Natural killer cell (primary cell): ENCODE measurements at regions of chr7 and their contacts with region 1.

Region 1: GRCh38 chr7:44847508-44847920 is 373 bp downstream of the H2AZ2 start:
- DNase-seq: peak; percentile 84 to 91
- ATAC-seq: peak; percentile 54 to 76 (median 62)
- H3K4me3 ChIP-seq: peak overlapping the region; percentile 83
- H3K4me3 Mint-ChIP-seq: peak overlapping the region; percentile 98
- H3K27ac ChIP-seq: peak overlapping the region; percentile 100
- H3K27ac Mint-ChIP-seq: peak overlapping the region; percentile 98 to 99
- H3K4me1 ChIP-seq: peaks cover 15% of the 10 kb centered on the region
- H3K4me1 Mint-ChIP-seq: peaks cover 28 to 38% of the 10 kb centered on the region in 2 donors
- H3K27me3 ChIP-seq: no peaks in the 10 kb centered on the region
- H3K27me3 Mint-ChIP-seq: no peaks in the 10 kb centered on the region
- CTCF ChIP-seq: peak; percentile 81

Region 2: GRCh38 chr7:44489955-44490350 is 357.6 kb before region 1 on chr7:
- intact Hi-C with region 1: loop called (anchors 5 kb)
- DNase-seq: peak in 1 of 2 donors; percentile 72
- ATAC-seq: peak; percentile 25 to 39 (median 25)
- H3K4me3 ChIP-seq: peak overlapping the region; percentile 51
- H3K4me3 Mint-ChIP-seq: peak overlapping the region; percentile 92
- H3K27ac ChIP-seq: peak overlapping the region; percentile 81
- H3K27ac Mint-ChIP-seq: peak overlapping the region; percentile 85 to 88
- H3K4me1 ChIP-seq: peaks cover 10% of the 10 kb centered on the region
- H3K4me1 Mint-ChIP-seq: peaks cover 40 to 44% of the 10 kb centered on the region in 2 donors
- H3K27me3 ChIP-seq: no peaks in the 10 kb centered on the region
- H3K27me3 Mint-ChIP-seq: peaks cover 6% of the 10 kb centered on the region in 2 donors
- CTCF ChIP-seq: no peak

Region 3: DNA sequence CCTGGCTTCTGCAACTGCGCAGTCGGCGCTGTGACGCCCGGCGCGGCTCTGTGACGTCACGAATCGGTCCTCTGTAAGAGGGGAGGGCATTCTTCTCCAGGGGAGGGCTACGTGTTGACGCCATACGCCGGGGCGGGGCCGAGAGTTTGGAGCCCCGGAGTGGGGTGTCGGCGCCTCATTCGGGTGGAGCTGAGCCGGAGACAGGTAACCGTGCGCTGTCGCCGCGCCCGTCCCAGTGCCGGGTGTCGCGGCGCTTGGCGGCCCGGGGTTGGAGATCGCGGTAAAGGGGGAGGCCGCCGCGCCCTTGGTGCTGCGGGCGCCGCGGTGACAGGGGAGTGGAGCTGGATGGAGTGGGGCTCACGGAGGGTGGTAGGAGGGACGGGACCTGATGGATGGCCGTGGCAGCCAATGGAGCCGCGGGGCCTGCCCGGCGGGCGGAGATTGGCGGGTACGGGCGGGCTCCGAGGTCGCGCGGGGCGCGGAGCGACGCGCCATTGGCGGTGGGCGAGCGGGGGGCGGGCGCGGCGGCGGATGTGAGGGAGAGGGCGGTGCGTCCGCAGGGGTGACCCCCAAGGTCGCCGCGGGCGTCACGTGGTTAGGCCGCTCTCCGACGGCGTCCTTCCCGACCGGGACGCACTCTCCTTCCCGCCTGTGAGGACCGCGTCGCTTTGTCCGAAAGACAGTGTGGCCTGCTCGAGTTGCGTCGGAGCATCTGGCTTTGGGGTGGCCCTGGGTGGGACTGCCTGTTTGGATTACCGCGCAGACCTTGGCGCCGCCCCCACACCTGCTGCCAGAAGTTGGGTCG is 240.9 kb before region 1 on chr7 and contains the start of gene OGDH:
- intact Hi-C with region 1: loop called (anchors 1 kb)
- DNase-seq: peak; percentile 99 to 100
- ATAC-seq: peak; percentile 90 to 98 (median 92)
- H3K4me3 ChIP-seq: peak within 1 kb of the TSS; percentile 86
- H3K4me3 Mint-ChIP-seq: peak within 1 kb of the TSS; percentile 99
- H3K27ac ChIP-seq: peak within 1 kb of the TSS; percentile 92
- H3K27ac Mint-ChIP-seq: peak within 1 kb of the TSS; percentile 99 to 100
- H3K4me1 ChIP-seq: peaks cover 28% of the 10 kb centered on the region
- H3K4me1 Mint-ChIP-seq: peaks cover 27 to 35% of the 10 kb centered on the region in 2 donors
- H3K27me3 ChIP-seq: no peaks in the 10 kb centered on the region
- H3K27me3 Mint-ChIP-seq: no peaks in the 10 kb centered on the region
- CTCF ChIP-seq: no peak
- total RNA-seq, gene OGDH: 69.2 to 86.7 (median 81.4) TPM

Region 4: GRCh38 chr7:44638611-44639557 is 208.6 kb before region 1 on chr7:
- intact Hi-C with region 1: loop called (anchors 2 kb)
- DNase-seq: peak; percentile 72 to 87
- ATAC-seq: peak; percentile 79 to 91 (median 85)
- H3K4me3 ChIP-seq: no peak overlapping the region
- H3K4me3 Mint-ChIP-seq: peak overlapping the region; percentile 90
- H3K27ac ChIP-seq: peak overlapping the region; percentile 97
- H3K27ac Mint-ChIP-seq: peak overlapping the region; percentile 94 to 96
- H3K4me1 ChIP-seq: peaks cover 68% of the 10 kb centered on the region
- H3K4me1 Mint-ChIP-seq: peaks cover 65% of the 10 kb centered on the region in 2 donors
- H3K27me3 ChIP-seq: no peaks in the 10 kb centered on the region
- H3K27me3 Mint-ChIP-seq: no peaks in the 10 kb centered on the region
- CTCF ChIP-seq: no peak

Region 5: DNA sequence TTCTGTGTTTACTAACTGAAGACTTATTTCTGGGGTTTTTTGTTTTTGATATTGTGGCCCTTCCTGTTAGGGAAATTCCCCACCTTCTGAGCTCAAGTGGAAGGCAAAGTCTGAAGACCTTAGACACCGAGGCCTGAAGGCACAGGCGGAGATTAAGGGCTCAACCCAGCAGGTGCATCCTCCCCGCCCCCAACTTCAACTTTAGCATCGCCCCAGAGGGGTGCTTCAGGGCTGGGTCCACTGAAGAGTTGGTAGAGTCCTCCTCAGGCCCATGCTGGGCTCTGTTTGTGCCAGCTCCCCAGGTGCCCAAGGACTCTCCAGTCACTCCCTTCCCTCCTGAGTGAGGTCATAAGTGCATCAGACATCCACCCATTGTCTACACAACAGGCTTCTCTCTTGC is 60.5 kb before region 1 on chr7:
- intact Hi-C with region 1: no loop called
- DNase-seq: no peak
- ATAC-seq: peak in 2 of 3 donors; percentile 17 to 38
- H3K4me3 ChIP-seq: no peak overlapping the region
- H3K4me3 Mint-ChIP-seq: no peak overlapping the region
- H3K27ac ChIP-seq: no peak overlapping the region
- H3K27ac Mint-ChIP-seq: no peak overlapping the region
- H3K4me1 ChIP-seq: no peaks in the 10 kb centered on the region
- H3K4me1 Mint-ChIP-seq: no peaks in the 10 kb centered on the region
- H3K27me3 ChIP-seq: no peaks in the 10 kb centered on the region
- H3K27me3 Mint-ChIP-seq: no peaks in the 10 kb centered on the region
- CTCF ChIP-seq: no peak

Region 6: GRCh38 chr7:44797329-44798251 is 49.9 kb before region 1 on chr7:
- intact Hi-C with region 1: loop called (anchors 1 kb)
- DNase-seq: peak; percentile 80 to 90
- ATAC-seq: peak; percentile 60 to 80 (median 70)
- H3K4me3 ChIP-seq: peak overlapping the region; percentile 99
- H3K4me3 Mint-ChIP-seq: peak overlapping the region; percentile 94
- H3K27ac ChIP-seq: peak overlapping the region; percentile 99
- H3K27ac Mint-ChIP-seq: peak overlapping the region; percentile 95 to 96
- H3K4me1 ChIP-seq: peaks cover 21% of the 10 kb centered on the region
- H3K4me1 Mint-ChIP-seq: peaks cover 27% of the 10 kb centered on the region in 2 donors
- H3K27me3 ChIP-seq: no peaks in the 10 kb centered on the region
- H3K27me3 Mint-ChIP-seq: no peaks in the 10 kb centered on the region
- CTCF ChIP-seq: peak; percentile 24

Region 7: DNA sequence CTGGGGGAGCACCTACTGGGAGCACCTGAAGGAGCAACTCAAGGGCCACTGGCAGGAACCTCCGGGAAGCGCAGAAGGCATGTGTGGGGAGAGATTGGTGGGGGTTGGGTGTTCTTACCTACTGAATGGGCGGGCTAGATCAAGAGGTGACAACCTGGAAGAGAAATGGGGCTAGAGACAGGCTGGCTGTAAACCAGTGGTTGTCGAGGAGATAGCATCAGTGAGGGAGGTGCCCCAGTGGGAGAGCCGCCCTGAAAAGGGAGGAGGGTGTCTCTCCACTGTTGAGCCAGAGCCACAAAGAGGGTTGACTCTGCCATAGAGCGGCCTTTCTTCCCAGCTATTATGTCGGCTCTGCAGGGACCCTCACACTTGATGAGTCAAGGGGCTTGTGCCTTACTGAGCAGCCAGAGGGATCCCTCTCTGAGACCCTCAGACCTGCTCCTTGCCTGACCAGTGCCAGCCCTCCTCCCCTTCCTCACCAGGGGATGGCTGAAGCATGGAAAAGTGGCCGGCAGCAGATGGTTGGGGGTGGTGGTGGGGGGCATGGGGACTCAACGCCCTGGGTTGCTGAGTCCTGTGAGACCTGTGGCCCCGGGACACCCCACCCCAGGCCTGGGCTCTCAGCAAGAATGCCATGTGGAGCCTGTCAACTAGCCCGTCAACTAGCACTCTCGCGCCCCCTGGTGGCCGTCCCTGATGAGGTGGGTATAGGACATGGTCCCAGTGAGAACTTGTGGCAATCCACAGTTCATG is 74.3 kb after region 1 on chr7:
- intact Hi-C with region 1: loop called (anchors 2 kb)
- DNase-seq: peak; percentile 94
- ATAC-seq: peak; percentile 94 to 99 (median 99)
- H3K4me3 ChIP-seq: no peak overlapping the region
- H3K4me3 Mint-ChIP-seq: no peak overlapping the region
- H3K27ac ChIP-seq: no peak overlapping the region
- H3K27ac Mint-ChIP-seq: peak overlapping the region in 1 of 2 donors; percentile 74
- H3K4me1 ChIP-seq: peaks cover 5% of the 10 kb centered on the region
- H3K4me1 Mint-ChIP-seq: peaks cover 0 to 4% of the 10 kb centered on the region in 2 donors
- H3K27me3 ChIP-seq: no peaks in the 10 kb centered on the region
- H3K27me3 Mint-ChIP-seq: peaks cover 0 to 7% of the 10 kb centered on the region in 2 donors
- CTCF ChIP-seq: peak; percentile 87

Region 8: DNA sequence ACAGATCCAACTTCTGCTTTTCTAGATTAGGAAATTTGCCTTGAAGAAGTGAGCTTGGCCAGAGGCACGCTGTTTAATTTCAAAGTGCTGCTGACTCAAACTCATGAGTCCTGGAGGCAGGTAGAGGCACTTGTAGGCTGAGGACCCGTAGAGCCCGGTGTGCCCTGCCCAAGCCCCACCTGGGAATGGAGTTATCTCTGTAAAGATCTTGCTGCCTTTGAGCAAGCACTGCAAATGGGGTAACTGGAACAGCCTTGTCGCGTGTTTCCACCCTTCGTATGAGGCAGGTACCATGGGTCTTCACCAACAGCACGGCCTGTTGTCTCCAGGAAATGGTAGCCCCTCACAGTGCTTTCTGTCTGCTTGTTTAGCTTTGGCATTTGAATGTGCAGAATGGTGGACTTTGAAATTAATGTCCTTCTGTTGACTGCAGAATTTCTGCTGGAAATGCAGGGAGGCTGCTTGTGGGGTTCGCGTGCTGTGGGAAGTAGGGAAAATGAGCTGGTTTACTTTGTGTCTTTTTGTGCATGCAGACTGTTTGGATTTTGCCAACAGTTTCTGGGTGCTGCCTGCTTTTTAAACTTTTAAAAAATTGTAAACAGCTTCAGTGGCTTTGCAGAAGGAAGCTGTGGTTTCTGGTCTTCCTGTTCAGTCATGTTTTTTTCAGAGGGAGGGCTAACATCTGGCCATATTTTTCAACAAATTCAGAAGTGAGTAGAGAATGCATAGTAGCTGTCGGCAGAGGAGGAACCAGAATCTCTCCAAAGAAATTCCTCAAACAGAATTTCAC is 179.7 kb after region 1 on chr7:
- intact Hi-C with region 1: loop called (anchors 10 kb)
- DNase-seq: peak; percentile 19 to 71
- ATAC-seq: peak; percentile 57 to 75 (median 69)
- H3K4me3 ChIP-seq: peak overlapping the region; percentile 88
- H3K4me3 Mint-ChIP-seq: peak overlapping the region; percentile 90
- H3K27ac ChIP-seq: peak overlapping the region; percentile 78
- H3K27ac Mint-ChIP-seq: peak overlapping the region; percentile 83 to 97
- H3K4me1 ChIP-seq: peaks cover 54% of the 10 kb centered on the region
- H3K4me1 Mint-ChIP-seq: peaks cover 64 to 69% of the 10 kb centered on the region in 2 donors
- H3K27me3 ChIP-seq: no peaks in the 10 kb centered on the region
- H3K27me3 Mint-ChIP-seq: no peaks in the 10 kb centered on the region
- CTCF ChIP-seq: no peak

Region 9: DNA sequence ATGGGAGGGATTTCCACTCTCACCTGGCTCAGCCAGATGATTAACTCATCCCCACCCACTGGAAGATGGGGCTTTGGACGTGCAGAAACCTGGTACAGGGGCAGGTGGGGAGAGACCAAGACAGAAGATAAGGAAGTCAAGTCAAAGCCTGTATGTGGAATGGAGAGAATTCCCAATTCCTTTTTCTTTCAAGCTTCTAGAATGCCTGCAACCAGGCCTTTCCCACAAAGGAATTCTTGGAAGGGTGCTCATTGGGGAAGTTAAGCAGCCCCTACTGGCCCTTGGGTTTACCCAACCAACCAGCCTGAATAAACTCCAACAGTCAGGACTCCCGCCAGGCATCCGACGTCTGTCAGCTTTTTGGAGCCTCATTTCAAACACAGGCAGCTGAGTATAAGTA is 191.6 kb after region 1 on chr7:
- intact Hi-C with region 1: no loop called
- DNase-seq: no peak
- ATAC-seq: no peak
- H3K4me3 ChIP-seq: no peak overlapping the region
- H3K4me3 Mint-ChIP-seq: no peak overlapping the region
- H3K27ac ChIP-seq: no peak overlapping the region
- H3K27ac Mint-ChIP-seq: peak overlapping the region; percentile 77 to 84
- H3K4me1 ChIP-seq: peaks cover 42% of the 10 kb centered on the region
- H3K4me1 Mint-ChIP-seq: peaks cover 62 to 75% of the 10 kb centered on the region in 2 donors
- H3K27me3 ChIP-seq: no peaks in the 10 kb centered on the region
- H3K27me3 Mint-ChIP-seq: no peaks in the 10 kb centered on the region
- CTCF ChIP-seq: no peak